ENCODE measurements at regions of chr10 and their contacts with region 1.

Region 1: DNA sequence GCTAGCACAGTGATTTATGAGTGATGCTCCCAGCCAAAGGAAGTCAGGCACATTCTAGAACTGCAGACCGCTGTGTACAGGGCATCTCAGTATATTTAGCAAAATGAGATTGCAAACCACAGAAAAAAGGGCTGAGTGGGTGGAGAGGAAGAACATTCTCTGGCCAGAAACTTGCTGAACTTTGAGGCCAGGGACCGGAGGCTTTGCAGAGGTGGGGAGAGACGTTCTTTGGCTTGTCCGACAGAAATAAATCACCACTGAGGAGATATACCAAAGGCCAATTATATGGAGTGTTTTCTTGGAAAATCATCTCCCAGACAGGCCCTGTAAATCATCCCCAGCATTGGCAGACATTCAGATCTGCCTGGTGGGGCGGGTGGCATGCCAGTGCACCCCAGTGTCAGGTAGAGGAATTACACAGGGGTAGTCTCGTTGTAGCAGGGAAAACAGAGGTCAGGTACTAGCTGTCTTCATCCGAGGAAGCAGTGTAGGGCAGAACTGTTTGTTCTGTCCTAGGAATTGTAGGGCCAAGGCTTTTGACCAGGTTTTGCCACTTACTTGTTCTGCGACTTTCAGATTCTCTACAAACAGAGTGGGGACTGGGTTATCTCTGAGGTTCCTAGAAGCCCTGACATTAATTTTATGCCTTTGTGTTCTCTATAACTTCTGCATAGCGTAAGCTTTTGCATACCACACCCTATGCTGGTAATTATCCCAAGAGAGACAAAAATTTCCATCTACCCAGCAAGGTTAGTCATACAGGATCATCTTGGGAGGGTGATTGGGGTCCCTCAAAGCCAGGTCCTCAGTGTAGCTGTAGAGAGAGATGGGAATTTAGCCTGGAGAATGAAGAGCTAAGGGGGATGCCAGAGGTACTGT is 655.6 kb downstream of the LRMDA start:
- DNase-seq: peak; percentile 68 to 74
- H3K4me3 ChIP-seq: no peak overlapping the region
- H3K4me3 Mint-ChIP-seq: no peak overlapping the region
- H3K27ac Mint-ChIP-seq: peak overlapping the region; percentile 34
- H3K4me1 ChIP-seq: peaks cover 15% of the 10 kb centered on the region
- H3K4me1 Mint-ChIP-seq: peaks cover 6% of the 10 kb centered on the region
- H3K27me3 ChIP-seq: no peaks in the 10 kb centered on the region
- H3K27me3 Mint-ChIP-seq: no peaks in the 10 kb centered on the region
- CTCF ChIP-seq: peak; percentile 72 to 79

Region 2: DNA sequence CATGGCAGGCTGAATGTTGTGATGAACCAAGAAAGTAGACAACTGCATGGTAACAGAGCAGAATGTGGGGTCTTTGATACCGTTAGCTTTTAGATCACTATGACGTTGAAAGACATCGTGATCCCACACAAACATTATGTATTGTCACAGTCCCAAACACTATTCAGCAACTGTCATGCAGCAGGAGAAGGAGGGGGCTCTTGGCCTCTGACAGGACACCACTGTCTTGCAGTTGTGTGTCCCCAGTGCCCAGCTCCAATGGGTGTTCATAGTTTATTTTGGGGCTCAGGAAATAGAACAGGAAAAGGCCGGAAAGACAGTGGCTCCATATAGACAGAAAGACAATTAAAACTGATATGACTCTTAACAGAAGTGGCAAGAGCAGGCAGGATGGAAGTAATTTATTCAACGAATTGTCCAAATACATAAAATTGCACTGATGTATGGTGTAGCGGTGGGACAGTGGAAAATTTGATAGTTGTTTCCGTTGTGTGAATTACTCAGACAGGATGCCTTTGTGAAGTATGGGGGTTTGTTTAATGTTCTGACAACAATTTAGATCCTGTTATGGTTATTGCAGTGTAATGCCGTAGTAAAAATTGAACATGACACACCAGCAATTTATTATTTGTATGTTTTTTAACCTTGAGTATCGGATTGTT is 363.6 kb before region 1 on chr10:
- CTCF ChIA-PET with region 1: no interaction called
- POLR2A ChIA-PET with region 1: no interaction called
- intact Hi-C with region 1: loop called (anchors 10 kb)
- DNase-seq: no peak
- H3K4me3 ChIP-seq: no peak overlapping the region
- H3K4me3 Mint-ChIP-seq: no peak overlapping the region
- H3K27ac Mint-ChIP-seq: no peak overlapping the region
- H3K4me1 ChIP-seq: no peaks in the 10 kb centered on the region
- H3K4me1 Mint-ChIP-seq: no peaks in the 10 kb centered on the region
- H3K27me3 ChIP-seq: no peaks in the 10 kb centered on the region
- H3K27me3 Mint-ChIP-seq: no peaks in the 10 kb centered on the region
- CTCF ChIP-seq: no peak

Region 3: GRCh38 chr10:76150876-76151288 is 63.9 kb after region 1 on chr10:
- CTCF ChIA-PET with region 1: no interaction called
- POLR2A ChIA-PET with region 1: no interaction called
- intact Hi-C with region 1: no loop called
- DNase-seq: peak; percentile 48 to 57
- H3K4me3 ChIP-seq: no peak overlapping the region
- H3K4me3 Mint-ChIP-seq: peak overlapping the region; percentile 68
- H3K27ac Mint-ChIP-seq: peak overlapping the region; percentile 99
- H3K4me1 ChIP-seq: peaks cover 26% of the 10 kb centered on the region
- H3K4me1 Mint-ChIP-seq: peaks cover 28% of the 10 kb centered on the region
- H3K27me3 ChIP-seq: no peaks in the 10 kb centered on the region
- H3K27me3 Mint-ChIP-seq: no peaks in the 10 kb centered on the region
- CTCF ChIP-seq: no peak

Measured in Caco-2 (cell line).